ENCODE measurements at regions of chr3 and their contacts with region 1.

Region 1: DNA sequence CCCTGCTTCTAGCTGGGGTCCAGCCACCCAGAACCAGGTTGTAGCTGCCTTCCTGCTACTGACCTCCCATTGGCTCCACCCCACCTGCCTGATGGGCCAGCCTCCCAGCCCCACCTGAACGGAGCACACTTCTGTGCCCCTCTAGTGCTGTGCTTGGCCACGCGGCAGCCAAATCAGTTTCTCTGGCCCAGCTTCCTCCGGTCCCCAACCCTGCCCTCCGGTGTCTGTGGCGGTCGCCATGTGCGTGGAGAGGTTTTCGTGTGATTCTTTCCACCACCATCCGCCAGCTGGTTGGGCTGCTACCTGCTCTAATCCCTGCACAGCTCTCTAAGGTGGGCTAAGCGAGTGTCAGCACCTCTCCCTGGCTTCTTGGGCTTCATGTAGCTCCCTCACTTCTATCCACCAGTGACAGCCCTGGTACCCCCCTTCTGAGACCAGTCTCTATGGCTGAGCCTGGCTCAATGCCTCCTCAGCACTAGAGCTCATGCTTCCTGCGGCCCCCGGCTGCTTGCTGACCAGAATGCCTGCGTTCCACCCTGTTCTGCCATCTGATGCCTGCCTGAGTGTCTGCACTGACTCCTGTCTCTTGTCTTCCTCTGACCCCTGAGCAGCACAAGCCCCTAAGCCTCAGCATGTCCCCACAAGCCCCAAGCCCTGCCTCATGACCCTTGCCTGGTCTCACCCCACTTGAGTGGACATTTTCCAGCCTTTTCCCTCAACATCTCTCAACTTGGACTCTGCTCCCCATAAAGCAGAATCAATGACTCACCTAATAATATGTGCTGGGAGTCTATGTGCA is 23.2 kb upstream of the MAGEF1 start:
- DNase-seq: peak in 1 of 5 donors; percentile 6
- H3K4me3 ChIP-seq: no peak overlapping the region
- H3K27ac ChIP-seq: no peak overlapping the region
- H3K4me1 ChIP-seq: no peaks in the 10 kb centered on the region
- H3K27me3 ChIP-seq: no peaks in the 10 kb centered on the region
- CTCF ChIP-seq: no peak
- EP300 ChIP-seq: no peak
- POLR2A ChIP-seq: no peak

Region 2: GRCh38 chr3:184777336-184778004 is 42.4 kb after region 1 on chr3:
- intact Hi-C with region 1: loop called in 1 of 4 experiments (anchors 5 kb)
- DNase-seq: peak; percentile 85 to 96 (median 87)
- H3K4me3 ChIP-seq: no peak overlapping the region
- H3K27ac ChIP-seq: no peak overlapping the region
- H3K4me1 ChIP-seq: peaks cover 1% of the 10 kb centered on the region
- H3K27me3 ChIP-seq: no peaks in the 10 kb centered on the region
- CTCF ChIP-seq: peak; percentile 71 to 96 (median 96)
- EP300 ChIP-seq: no peak
- POLR2A ChIP-seq: no peak

Measured in ovary (tissue), 10 donors.